ENCODE measurements at regions of chr12 and their contacts with region 1.

Region 1: GRCh38 chr12:54439521-54440255 is 20.6 kb upstream of the ITGA5 start:
- DNase-seq: no peak
- ATAC-seq: peak; percentile 96 to 98
- H3K4me3 ChIP-seq: no peak overlapping the region
- H3K27ac ChIP-seq: no peak overlapping the region
- H3K4me1 ChIP-seq: peaks cover 6 to 10% of the 10 kb centered on the region in 2 donors
- H3K27me3 ChIP-seq: no peaks in the 10 kb centered on the region
- CTCF ChIP-seq: peak; percentile 71 to 89 (median 80)
- POLR2A ChIP-seq: no peak

Region 2: DNA sequence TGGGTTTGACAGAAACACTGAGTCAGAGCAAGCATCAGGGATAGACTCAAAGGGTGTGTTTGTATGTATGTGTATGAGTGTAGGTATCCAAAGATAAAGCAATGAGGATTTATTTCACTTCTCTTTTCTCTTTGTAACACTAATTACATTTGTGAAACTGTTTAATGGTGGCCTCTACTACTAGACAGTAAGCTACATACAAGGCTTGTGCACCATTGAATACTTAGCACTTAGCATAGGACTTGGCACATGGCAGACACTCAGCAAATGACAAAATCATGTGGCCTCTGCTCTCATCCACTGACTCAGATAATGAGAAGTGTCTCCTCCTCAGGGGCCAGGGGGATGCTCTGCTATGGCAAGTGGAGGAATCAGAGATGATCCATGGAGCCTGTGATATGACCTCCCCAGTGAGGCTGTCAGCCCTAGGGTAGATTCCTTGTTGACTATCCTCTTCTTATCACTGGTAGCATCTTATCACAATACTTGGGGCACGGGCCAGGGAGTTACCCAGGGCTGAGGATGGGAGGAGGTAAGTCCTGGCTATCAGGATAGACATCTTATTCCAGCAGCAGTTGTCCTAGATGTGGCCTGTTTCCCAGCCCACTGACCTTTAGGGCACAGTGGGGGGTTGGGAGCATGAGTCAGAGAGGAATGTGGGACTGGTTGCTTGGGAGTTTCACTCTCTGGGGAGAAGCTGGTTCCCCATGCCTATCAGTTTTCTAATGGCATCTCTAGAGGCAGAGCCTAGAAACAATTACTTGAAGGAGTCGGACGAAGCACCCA is 572.3 kb before region 1 on chr12:
- in situ Hi-C with region 1: no loop called
- intact Hi-C with region 1: no loop called
- DNase-seq: no peak
- ATAC-seq: no peak
- H3K4me3 ChIP-seq: no peak overlapping the region
- H3K27ac ChIP-seq: no peak overlapping the region
- H3K4me1 ChIP-seq: no peaks in the 10 kb centered on the region
- H3K27me3 ChIP-seq: peaks cover 0 to 17% (median 0%) of the 10 kb centered on the region in 3 donors
- CTCF ChIP-seq: no peak
- POLR2A ChIP-seq: no peak

Region 3: GRCh38 chr12:54251667-54252284 is 187.9 kb before region 1 on chr12:
- in situ Hi-C with region 1: no loop called
- intact Hi-C with region 1: no loop called
- DNase-seq: no peak
- ATAC-seq: peak; percentile 55 to 75
- H3K4me3 ChIP-seq: no peak overlapping the region
- H3K27ac ChIP-seq: no peak overlapping the region
- H3K4me1 ChIP-seq: peaks cover 11 to 13% of the 10 kb centered on the region in 2 donors
- H3K27me3 ChIP-seq: no peaks in the 10 kb centered on the region
- CTCF ChIP-seq: peak; percentile 55 to 64 (median 59)
- POLR2A ChIP-seq: no peak

Region 4: DNA sequence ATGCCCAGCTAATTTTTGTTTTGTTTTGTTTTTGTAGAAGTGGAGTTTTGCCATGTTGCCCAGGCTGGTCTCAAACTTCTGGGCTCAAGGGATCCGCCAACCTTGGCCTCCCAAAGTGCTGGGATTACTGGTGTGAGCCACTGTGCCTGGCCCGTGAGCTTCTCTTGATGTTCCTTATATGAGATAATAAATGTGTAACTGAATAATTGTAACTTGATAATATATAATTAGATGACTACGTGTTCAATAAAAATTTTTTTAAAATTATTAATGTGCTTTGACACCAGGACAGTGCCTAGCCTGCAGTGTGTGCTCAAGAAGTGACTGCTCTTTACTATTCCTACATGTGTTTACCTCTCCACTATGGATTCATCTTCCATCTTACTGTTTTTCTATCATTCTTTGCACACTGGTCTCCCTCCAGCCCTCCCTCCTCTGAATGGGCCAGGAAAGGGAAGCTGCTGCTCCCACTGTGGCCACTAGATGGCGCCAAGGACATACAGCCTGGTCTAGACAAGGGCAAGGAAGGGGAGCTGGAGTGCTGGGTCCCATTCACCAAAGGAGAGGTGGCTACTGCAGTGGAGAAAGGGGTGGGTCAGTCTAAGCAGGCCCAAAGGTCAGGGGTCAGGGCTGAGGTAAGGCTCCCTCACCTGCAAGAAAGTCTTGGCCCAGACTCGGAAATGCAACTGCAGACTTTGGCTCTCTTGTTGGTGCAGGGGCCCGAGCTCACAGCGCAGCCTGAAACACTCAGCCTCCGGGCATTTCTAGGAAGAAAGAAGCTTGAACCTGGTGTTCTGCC is 40.5 kb before region 1 on chr12:
- in situ Hi-C with region 1: loop called (anchors 5 kb)
- intact Hi-C with region 1: loop called (anchors 1 kb)
- DNase-seq: peak in 1 of 2 donors; percentile 78
- ATAC-seq: peak; percentile 69 to 89
- H3K4me3 ChIP-seq: no peak overlapping the region
- H3K27ac ChIP-seq: no peak overlapping the region
- H3K4me1 ChIP-seq: no peaks in the 10 kb centered on the region
- H3K27me3 ChIP-seq: no peaks in the 10 kb centered on the region
- CTCF ChIP-seq: peak; percentile 95 to 99 (median 95)
- POLR2A ChIP-seq: no peak

Region 5: DNA sequence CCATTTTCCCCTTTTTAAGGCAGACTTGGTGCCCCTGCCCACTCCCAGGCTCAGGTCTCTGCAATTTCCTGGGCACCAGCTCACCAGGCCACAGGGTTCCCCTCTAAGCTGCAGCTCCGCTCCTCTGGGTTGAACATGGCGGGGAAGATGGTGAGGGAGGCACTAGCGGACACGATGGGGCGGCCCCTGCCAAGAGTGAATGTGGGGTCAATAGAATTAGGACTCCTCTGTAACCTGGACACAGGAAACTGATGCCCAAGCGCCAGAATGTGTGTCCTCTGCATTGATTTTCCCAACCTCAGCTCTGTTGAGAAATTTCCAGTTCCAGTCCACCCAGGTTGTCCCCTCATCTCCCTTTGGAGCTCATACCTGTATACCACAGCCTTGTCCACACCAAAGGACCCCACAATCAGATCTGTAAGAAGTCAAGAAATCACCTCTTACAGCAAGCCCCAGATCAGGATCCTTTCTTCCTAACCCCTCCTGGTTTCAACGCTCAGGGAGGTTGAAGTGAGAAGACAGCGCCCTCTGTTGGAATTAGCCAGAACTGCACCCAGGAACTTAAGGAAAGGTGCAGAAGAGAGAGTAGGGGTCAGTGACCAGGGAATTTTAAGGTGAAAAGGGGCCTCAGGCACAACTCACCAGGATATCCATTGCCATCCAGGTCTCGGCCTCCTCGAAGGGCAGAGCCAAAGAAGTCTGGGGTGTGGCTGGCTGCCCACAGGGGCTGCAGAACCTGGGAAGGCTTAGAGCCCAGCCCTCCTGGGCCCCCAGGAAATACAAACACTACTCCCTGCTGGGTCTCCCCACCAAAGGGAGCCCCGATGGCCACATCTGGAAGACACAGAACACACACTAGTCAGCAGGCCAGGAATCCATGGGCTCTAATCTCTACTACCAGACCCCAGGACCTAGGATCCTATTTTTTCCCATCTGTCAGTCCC is 35.4 kb before region 1 on chr12:
- in situ Hi-C with region 1: loop called (anchors 5 kb)
- intact Hi-C with region 1: loop called (anchors 1 kb)
- DNase-seq: no peak
- ATAC-seq: peak in 1 of 2 donors; percentile 27
- H3K4me3 ChIP-seq: no peak overlapping the region
- H3K27ac ChIP-seq: peak overlapping the region in 1 of 4 donors; percentile 16
- H3K4me1 ChIP-seq: no peaks in the 10 kb centered on the region
- H3K27me3 ChIP-seq: no peaks in the 10 kb centered on the region
- CTCF ChIP-seq: peak; percentile 83 to 92 (median 87)
- POLR2A ChIP-seq: no peak

Region 6: GRCh38 chr12:54419088-54419892 is 20.4 kb before region 1 on chr12 and contains the start of gene ITGA5:
- in situ Hi-C with region 1: no loop called
- intact Hi-C with region 1: loop called (anchors 2 kb)
- DNase-seq: peak; percentile 70 to 76
- ATAC-seq: peak; percentile 70 to 76
- H3K4me3 ChIP-seq: peak within 1 kb of the TSS; percentile 81 to 99 (median 92)
- H3K27ac ChIP-seq: peak within 1 kb of the TSS; percentile 79 to 97 (median 88)
- H3K4me1 ChIP-seq: peaks cover 20 to 38% of the 10 kb centered on the region in 2 donors
- H3K27me3 ChIP-seq: peaks cover 0 to 5% (median 0%) of the 10 kb centered on the region in 3 donors
- CTCF ChIP-seq: no peak
- POLR2A ChIP-seq: peak; percentile 74 to 86
- total RNA-seq, gene ITGA5: 26.5 to 34.1 (median 30.9) TPM

Region 7: DNA sequence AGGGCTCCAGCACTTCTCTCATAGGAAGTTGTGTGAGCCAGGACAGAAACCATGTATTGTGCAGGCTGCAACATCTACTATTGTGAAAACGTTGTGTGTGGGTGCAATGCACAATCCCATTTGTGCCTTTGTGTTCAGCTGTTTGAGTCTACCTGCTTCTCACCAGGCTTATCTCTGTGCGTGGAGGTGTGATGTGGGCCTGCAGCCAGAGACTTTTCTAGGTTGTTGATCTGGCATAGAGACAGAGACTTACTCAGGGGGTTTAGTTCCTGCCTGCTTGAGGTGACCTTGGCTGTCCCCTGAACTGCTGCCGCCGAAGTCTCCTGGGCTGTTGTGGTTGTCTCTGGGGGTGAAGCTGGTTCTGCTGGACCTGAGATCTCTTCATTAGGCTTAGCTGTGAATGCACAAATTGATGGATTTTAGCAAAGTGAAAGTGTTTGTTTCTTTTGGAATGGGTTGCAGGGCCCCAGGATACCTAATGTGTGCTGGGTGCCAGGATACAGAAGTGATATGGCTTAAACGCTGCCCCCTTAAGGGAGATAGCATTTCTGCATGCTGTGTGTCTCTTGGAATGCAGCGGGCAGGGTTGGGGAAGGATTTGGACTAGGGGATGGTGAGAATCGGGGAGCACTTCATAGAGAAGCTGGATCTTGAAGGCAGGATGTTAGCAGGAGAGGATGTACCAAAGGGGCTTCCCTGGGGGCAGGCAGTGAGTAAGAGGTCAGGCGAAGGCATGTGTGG is 192.5 kb after region 1 on chr12:
- in situ Hi-C with region 1: no loop called
- intact Hi-C with region 1: no loop called
- DNase-seq: no peak
- ATAC-seq: no peak
- H3K4me3 ChIP-seq: no peak overlapping the region
- H3K27ac ChIP-seq: no peak overlapping the region
- H3K4me1 ChIP-seq: peaks cover 0 to 10% of the 10 kb centered on the region in 2 donors
- H3K27me3 ChIP-seq: no peaks in the 10 kb centered on the region
- CTCF ChIP-seq: no peak
- POLR2A ChIP-seq: no peak

Region 8: DNA sequence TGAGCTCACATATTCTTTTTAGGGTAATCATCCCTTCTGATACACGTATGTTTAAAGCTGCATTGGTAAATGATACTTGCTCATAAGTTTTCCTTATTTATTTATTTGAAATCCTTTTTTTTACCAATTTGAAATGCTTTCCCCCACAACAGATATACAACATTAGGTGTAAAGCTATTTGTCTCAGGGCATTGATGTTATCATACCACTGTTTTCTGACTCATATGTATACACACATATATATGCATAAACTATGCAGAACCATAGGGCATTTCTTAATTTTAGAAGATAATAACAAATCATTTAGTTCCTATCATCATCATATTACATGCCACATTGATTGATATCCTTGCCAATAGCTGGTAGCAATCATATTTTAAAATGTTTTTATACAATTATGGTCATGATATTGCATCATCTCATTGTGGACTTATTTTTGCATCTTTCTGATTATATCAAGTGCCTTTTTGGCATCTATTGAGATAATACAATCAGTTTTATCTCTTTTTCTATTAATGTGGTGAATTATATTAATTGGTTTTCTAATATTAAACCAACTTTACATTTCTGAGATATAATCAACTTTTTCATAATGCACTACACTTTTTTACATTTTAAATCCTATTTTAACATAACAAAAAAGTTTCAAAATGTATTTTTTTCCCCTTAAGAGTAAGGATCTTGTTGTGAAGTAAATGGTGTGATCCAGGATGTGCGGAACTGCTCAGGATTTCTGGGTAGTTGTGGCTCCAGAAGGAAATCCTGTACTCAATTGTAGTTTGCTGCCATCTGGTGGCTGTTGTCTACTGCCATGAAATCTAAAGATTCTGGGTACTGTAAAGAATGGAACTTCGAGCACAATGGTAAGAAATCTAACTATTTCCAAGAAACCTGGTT is 703.2 kb after region 1 on chr12:
- in situ Hi-C with region 1: no loop called
- intact Hi-C with region 1: no loop called
- DNase-seq: no peak
- ATAC-seq: no peak
- H3K4me3 ChIP-seq: no peak overlapping the region
- H3K27ac ChIP-seq: no peak overlapping the region
- H3K4me1 ChIP-seq: no peaks in the 10 kb centered on the region
- H3K27me3 ChIP-seq: no peaks in the 10 kb centered on the region
- CTCF ChIP-seq: peak in 2 of 5 experiments; percentile 17 to 40
- POLR2A ChIP-seq: no peak

Measured in gastrocnemius medialis (tissue), 4 donors.